Activated CD8-positive, alpha-beta T cell treated with anti-CD3 and anti-CD28 coated beads, Interleukin-2, amount 10 ng/mL, durations not matched to agents 7 days and 5 days (primary cell): ENCODE measurements at regions of chr15 and their contacts with region 1.

Region 1: DNA sequence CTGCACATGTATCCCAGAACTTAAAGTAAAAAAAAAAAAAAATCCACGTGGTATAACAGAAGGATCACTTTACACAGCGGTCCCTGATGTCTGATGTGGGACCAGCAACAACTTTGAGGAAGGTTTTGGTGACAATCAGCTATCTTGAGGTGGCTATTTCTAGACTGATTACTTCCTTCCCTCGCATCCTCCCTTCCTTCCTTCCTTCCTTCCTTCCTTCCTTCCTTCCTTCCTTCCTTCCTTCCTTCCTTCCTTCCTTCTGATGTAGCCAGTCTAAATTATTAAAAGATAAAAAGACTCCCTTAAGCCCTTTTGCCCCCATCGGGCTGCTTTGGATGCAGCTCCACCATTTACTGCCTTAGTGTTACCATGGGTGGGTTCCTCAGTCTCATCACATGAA is 14.9 kb downstream of the SORD start:
- DNase-seq: no peak
- ATAC-seq: no peak
- H3K4me3 Mint-ChIP-seq: no peak overlapping the region
- H3K27ac Mint-ChIP-seq: no peak overlapping the region
- H3K4me1 Mint-ChIP-seq: peaks cover 27% of the 10 kb centered on the region
- H3K27me3 Mint-ChIP-seq: no peaks in the 10 kb centered on the region

Region 2: DNA sequence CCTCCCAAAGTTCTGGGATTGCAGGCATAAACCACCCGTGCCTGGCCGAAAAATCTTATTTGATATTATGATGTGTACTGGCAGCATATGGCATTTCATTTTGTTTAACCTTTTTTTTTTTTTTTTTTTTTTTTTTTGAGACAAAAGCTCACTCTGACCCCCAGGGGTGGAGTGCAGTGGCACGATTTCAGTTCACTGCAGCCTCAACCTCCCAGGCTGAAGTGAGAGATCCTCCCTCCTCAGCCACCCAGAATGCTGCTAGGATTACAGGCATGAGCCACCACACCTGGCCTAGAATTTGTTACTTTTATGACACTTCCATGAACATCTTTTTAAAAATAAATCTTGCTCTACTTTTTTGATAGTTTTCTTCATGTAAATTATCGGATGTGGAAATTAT is 69.5 kb before region 1 on chr15:
- CTCF ChIA-PET with region 1: interaction called, 21 read pairs
- POLR2A ChIA-PET with region 1: no interaction called
- DNase-seq: no peak
- ATAC-seq: no peak
- H3K4me3 Mint-ChIP-seq: no peak overlapping the region
- H3K27ac Mint-ChIP-seq: no peak overlapping the region
- H3K4me1 Mint-ChIP-seq: no peaks in the 10 kb centered on the region
- H3K27me3 Mint-ChIP-seq: peaks cover 5% of the 10 kb centered on the region

Region 3: GRCh38 chr15:45022871-45023658 is 14.9 kb before region 1 on chr15 and contains the start of gene SORD:
- CTCF ChIA-PET with region 1: interaction called, 13 read pairs
- POLR2A ChIA-PET with region 1: no interaction called
- DNase-seq: peak; percentile 93
- ATAC-seq: peak; percentile 99
- H3K4me3 Mint-ChIP-seq: peak within 1 kb of the TSS; percentile 81
- H3K27ac Mint-ChIP-seq: peak within 1 kb of the TSS; percentile 68
- H3K4me1 Mint-ChIP-seq: peaks cover 32% of the 10 kb centered on the region
- H3K27me3 Mint-ChIP-seq: peaks cover 22% of the 10 kb centered on the region
- total RNA-seq, gene SORD: 7.1 to 7.5 TPM

Region 4: DNA sequence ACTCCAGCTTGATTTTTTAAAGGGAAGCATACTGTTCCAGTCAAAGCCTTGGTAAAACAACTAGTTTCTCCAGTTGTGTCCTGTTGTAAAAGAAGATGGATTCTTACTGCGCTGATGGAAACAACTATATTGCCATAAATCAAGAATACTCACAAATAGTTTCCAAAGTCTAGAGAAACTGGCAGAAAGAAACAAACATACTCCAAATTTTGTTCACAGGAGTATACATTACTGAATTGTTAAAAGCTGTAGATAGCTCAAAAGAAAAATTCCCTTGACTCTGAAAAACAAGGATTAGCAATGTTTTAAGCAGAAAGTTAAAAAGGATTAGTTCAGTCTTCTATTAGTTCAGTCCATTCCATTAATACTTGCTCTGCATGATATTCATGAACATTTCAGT is 12.7 kb after region 1 on chr15:
- CTCF ChIA-PET with region 1: interaction called, 10 read pairs
- POLR2A ChIA-PET with region 1: no interaction called
- DNase-seq: no peak
- ATAC-seq: no peak
- H3K4me3 Mint-ChIP-seq: no peak overlapping the region
- H3K27ac Mint-ChIP-seq: no peak overlapping the region
- H3K4me1 Mint-ChIP-seq: no peaks in the 10 kb centered on the region
- H3K27me3 Mint-ChIP-seq: no peaks in the 10 kb centered on the region